Tibial artery (tissue), 4 donors: ENCODE measurements at regions of chr5 and their contacts with region 1.

Region 1: GRCh38 chr5:2375757-2376250 is 375.7 kb downstream of the IRX2 start:
- DNase-seq: no peak
- H3K4me3 ChIP-seq: no peak overlapping the region
- H3K27ac ChIP-seq: no peak overlapping the region
- H3K4me1 ChIP-seq: no peaks in the 10 kb centered on the region
- H3K27me3 ChIP-seq: no peaks in the 10 kb centered on the region
- CTCF ChIP-seq: no peak

Region 2: GRCh38 chr5:2311851-2312250 is 64.0 kb before region 1 on chr5:
- intact Hi-C with region 1: loop called (anchors 2 kb)
- DNase-seq: peak in 1 of 2 donors; percentile 10
- H3K4me3 ChIP-seq: no peak overlapping the region
- H3K27ac ChIP-seq: no peak overlapping the region
- H3K4me1 ChIP-seq: no peaks in the 10 kb centered on the region
- H3K27me3 ChIP-seq: no peaks in the 10 kb centered on the region
- CTCF ChIP-seq: no peak

Region 3: GRCh38 chr5:2338686-2339085 is 37.1 kb before region 1 on chr5:
- intact Hi-C with region 1: no loop called
- DNase-seq: no peak
- H3K4me3 ChIP-seq: no peak overlapping the region
- H3K27ac ChIP-seq: no peak overlapping the region
- H3K4me1 ChIP-seq: no peaks in the 10 kb centered on the region
- H3K27me3 ChIP-seq: no peaks in the 10 kb centered on the region
- CTCF ChIP-seq: no peak

Region 4: DNA sequence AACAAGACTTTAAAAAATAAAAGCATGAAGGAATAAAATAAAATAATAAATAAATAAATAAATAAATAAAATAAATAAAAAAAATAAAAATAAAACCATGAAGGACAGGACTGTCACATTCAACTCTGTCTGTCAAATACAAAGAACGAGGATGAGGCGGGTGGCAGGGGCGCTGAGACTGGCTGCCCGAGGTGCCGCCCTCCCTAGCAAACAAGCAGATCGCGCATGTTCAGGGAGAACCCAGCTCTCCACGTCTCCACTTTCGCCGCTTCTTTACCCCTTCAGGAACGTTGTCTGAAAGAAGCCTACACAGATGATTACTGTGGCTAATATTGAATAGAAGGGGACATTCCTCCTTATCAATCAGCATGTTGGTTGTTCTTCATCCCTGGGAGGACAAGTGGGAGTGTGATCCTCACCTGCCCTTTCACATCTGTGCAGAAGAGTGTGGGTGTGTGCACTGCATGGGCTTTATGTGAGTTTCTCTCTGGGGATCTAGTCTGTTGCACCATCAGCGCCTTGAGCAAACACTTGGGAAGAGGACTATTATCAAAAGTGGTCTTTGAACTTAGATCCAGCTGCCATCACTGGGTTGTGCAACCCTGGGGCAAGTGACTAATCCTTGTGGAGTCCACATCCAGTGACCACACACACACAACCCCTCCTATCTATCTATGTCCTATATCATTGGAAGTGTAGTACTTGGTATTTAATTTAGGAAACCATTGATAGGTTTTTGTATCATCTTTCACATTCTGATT is 23.5 kb before region 1 on chr5:
- intact Hi-C with region 1: no loop called
- DNase-seq: no peak
- H3K4me3 ChIP-seq: no peak overlapping the region
- H3K27ac ChIP-seq: no peak overlapping the region
- H3K4me1 ChIP-seq: no peaks in the 10 kb centered on the region
- H3K27me3 ChIP-seq: no peaks in the 10 kb centered on the region
- CTCF ChIP-seq: no peak

Region 5: GRCh38 chr5:2475895-2476294 is 100.1 kb after region 1 on chr5:
- intact Hi-C with region 1: no loop called
- DNase-seq: no peak
- H3K4me3 ChIP-seq: no peak overlapping the region
- H3K27ac ChIP-seq: no peak overlapping the region
- H3K4me1 ChIP-seq: no peaks in the 10 kb centered on the region
- H3K27me3 ChIP-seq: no peaks in the 10 kb centered on the region
- CTCF ChIP-seq: no peak

Region 6: DNA sequence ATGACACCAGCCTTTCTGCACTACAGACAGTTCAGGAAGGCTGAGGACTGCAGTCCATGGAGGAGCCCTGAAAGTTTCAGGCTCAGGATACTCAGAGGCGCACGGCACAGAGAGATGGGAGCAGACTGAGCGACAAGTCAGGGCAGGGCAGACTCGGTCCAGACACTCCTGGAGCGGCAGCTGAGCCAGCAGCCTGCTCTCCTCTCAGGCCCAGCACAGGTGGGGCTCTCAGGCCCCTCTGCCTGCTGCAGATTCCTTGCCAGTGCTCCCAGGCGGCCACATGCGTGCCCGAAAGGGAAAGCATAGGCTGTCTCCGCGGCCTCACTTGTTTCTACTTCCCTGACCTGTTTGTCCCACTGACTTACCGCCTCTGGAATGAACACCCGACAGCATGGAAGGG is 147.4 kb after region 1 on chr5:
- intact Hi-C with region 1: no loop called
- DNase-seq: no peak
- H3K4me3 ChIP-seq: no peak overlapping the region
- H3K27ac ChIP-seq: no peak overlapping the region
- H3K4me1 ChIP-seq: no peaks in the 10 kb centered on the region
- H3K27me3 ChIP-seq: no peaks in the 10 kb centered on the region
- CTCF ChIP-seq: no peak